Ovary (tissue), 10 donors: ENCODE measurements at regions of chr11 and their contacts with region 1.

Region 1: DNA sequence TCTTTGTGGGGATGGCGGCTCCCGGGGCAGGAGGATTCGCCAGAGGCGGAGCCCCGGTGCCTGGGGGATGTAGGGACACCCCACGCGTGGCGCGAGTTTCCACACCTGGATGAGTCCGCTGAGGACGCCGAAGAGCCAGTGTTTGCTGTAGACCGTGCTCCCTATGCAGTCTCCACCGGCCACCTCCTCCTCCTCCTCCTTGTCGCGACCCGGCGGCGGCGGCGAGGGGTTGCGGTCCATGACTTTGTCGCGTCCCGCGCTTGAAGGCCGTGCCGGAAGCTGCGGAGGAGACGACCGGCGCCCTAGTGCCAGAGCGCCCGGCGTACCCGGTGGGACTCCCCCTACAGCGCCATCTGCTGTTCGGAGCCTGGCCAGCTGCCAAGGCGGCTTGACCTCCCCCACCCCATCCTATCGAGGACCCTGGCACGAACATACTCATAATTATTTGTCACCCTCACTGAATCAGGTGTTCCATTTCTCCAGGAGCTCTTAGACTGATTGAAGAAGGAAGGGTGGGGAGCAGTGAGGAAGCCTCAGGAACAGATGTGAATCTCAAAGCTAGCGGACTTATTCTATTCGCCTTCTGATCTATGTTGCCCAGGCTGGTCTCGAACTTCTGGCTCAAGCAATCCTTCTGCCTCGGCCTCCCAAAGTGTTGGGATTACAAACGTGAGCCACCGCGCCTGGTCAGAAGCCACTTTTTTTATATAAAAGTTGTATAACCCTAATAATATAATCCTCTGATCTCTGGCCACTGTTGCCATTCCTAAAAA is at the start of gene SAAL1:
- DNase-seq: peak; percentile 78 to 90 (median 85)
- H3K4me3 ChIP-seq: peak within 1 kb of the TSS; percentile 84
- H3K27ac ChIP-seq: peak within 1 kb of the TSS; percentile 33 to 43
- H3K4me1 ChIP-seq: peaks cover 3% of the 10 kb centered on the region
- H3K27me3 ChIP-seq: no peaks in the 10 kb centered on the region
- CTCF ChIP-seq: peak; percentile 42 to 65 (median 62)
- EP300 ChIP-seq: no peak
- POLR2A ChIP-seq: peak; percentile 43
- total RNA-seq, gene SAAL1: 5.7 to 15.0 (median 12.6) TPM

Region 2: DNA sequence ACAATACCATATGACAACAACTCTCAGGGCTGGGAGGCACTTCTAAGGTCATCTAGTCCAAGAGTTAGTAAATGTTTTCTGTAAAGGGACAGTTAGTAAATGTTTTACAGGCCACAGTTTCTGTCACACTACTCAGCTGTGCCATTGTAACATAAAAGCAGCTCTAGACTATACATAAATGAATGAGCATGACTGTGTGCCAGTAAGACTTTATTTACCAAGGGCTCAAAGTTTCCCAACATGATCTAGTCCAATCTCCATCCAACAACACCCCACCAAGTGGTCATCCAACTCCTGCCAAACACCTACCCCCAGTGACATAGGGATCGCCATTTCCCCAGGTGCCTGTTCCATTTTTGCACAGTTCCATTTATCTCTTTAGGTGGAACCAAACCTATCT is 105.2 kb before region 1 on chr11:
- intact Hi-C with region 1: loop called in 1 of 4 experiments (anchors 5 kb)
- DNase-seq: no peak
- H3K4me3 ChIP-seq: no peak overlapping the region
- H3K27ac ChIP-seq: no peak overlapping the region
- H3K4me1 ChIP-seq: no peaks in the 10 kb centered on the region
- H3K27me3 ChIP-seq: no peaks in the 10 kb centered on the region
- CTCF ChIP-seq: no peak
- EP300 ChIP-seq: no peak
- POLR2A ChIP-seq: no peak

Region 3: DNA sequence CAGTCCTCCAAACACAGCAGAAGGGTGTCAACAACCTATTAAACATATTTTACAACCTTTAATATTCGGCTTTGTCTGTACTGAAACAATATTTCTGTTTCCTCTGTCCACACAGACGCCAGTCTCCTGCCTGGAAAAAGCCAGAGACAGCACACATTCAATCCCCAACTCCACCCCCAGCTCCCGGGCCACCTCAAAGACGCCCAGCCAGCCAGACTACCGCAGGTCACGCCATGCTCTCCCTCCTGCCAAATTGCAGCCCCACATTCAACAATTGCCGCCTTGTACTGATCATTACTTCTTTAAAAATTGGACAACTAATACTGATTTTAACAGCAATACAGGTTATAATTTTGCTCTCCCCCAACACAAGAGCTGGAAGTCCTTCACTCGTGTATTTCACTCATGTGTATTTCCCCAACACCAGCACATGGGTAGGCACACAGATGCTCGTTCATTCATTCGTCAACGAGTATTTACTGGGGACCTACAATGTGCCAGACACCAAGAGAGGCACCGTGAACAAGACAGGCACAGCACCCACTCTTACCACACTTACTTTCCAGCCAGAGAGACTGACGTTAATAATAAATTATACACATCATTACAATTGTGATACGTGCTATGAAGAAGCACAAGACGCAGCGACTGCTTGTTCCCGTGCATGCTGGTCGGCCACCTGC is 94.2 kb before region 1 on chr11:
- intact Hi-C with region 1: loop called in 1 of 4 experiments (anchors 2 kb)
- DNase-seq: peak in 2 of 5 donors; percentile 16 to 21
- H3K4me3 ChIP-seq: peak overlapping the region; percentile 61
- H3K27ac ChIP-seq: peak overlapping the region in 1 of 2 donors; percentile 84
- H3K4me1 ChIP-seq: peaks cover 4% of the 10 kb centered on the region
- H3K27me3 ChIP-seq: no peaks in the 10 kb centered on the region
- CTCF ChIP-seq: no peak
- EP300 ChIP-seq: no peak
- POLR2A ChIP-seq: no peak

Region 4: GRCh38 chr11:18193010-18193409 is 87.0 kb after region 1 on chr11:
- intact Hi-C with region 1: no loop called
- DNase-seq: no peak
- H3K4me3 ChIP-seq: no peak overlapping the region
- H3K27ac ChIP-seq: no peak overlapping the region
- H3K4me1 ChIP-seq: no peaks in the 10 kb centered on the region
- H3K27me3 ChIP-seq: no peaks in the 10 kb centered on the region
- CTCF ChIP-seq: no peak
- EP300 ChIP-seq: no peak
- POLR2A ChIP-seq: no peak

Region 5: GRCh38 chr11:18294862-18295261 is 188.9 kb after region 1 on chr11:
- intact Hi-C with region 1: loop called in 1 of 4 experiments (anchors 10 kb)
- DNase-seq: no peak
- H3K4me3 ChIP-seq: no peak overlapping the region
- H3K27ac ChIP-seq: no peak overlapping the region
- H3K4me1 ChIP-seq: no peaks in the 10 kb centered on the region
- H3K27me3 ChIP-seq: no peaks in the 10 kb centered on the region
- CTCF ChIP-seq: no peak
- EP300 ChIP-seq: no peak
- POLR2A ChIP-seq: no peak